ENCODE measurements at regions of chr7 and their contacts with region 1.

Region 1: DNA sequence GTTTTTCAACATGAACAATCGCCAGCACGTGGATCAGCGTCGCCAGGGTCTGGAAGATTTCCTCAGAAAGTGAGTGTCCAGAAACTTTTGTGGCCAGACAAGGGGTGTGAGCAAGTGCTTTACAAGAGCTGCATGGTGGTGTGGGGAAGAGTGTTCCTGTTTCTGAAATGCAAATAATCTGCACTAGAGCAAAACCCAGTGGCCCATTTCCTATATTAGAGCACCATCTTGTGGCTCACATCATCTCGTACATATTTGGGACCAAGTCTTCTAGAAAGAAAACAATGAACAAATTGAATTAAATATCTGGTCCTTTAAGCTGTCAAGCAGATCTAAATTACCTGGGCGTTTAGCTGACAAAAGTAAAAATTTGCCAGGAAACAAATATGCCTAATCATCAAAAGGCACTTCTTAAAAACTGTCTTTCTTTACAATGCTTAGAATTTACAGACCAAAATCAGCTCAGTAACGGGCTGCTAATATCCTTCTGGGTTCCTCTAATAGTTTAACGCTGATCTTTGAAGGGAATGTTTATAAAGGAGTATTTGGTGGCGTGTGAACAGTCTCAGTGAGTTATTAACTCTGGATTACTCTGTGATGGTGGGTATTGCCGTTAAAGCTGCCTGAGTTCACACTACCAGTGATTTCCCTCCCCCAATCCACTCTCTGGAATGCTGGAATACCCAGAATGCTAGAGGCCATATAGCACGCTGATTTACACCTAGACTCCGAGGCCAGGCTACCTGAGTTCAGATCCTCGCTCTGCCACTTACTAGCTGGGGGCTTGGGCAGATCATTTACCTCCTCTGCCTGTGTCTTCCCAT is 73.6 kb downstream of the SNX10 start:
- DNase-seq: peak; percentile 83
- ATAC-seq: peak; percentile 96
- H3K4me3 ChIP-seq: no peak overlapping the region
- H3K27ac ChIP-seq: peak overlapping the region; percentile 48; the same call in 1 of the 2 replicates
- H3K4me1 ChIP-seq: peaks cover 11% of the 10 kb centered on the region
- H3K27me3 ChIP-seq: no peaks in the 10 kb centered on the region
- CTCF ChIP-seq: peak; percentile 62 to 94 (median 64); a peak in 5 of 6 replicates
- EP300 ChIP-seq: no peak
- POLR2A ChIP-seq: no peak
- RAD21 ChIP-seq: peak; percentile 98

Region 2: DNA sequence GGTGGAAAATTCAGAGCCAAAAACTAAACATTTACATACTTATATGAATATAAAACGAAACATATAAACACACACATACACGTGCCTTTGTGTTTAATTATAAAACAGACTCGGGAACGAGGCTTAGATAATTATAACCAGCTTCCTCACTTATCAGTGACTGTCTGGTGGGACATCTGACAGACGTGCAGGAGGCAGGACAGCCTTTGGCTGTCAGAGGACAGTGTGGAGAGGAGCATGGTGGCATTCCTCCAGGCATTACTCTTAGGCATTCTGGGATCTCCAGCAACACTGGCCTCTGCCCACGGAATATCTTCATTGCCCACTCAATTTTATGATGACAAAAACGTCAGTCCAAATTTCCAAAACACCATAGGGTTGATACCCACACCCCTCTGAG is 475.5 kb before region 1 on chr7:
- CTCF ChIA-PET with region 1: interaction called, 138 read pairs
- POLR2A ChIA-PET with region 1: interaction called, 5 read pairs
- RAD21 ChIA-PET with region 1: interaction called, 68 read pairs
- SMC1A ChIA-PET with region 1: interaction called, 94 read pairs
- in situ Hi-C with region 1: loop called (anchors 5 kb)
- intact Hi-C with region 1: loop called (anchors 1 kb)
- DNase-seq: no peak
- ATAC-seq: no peak
- H3K4me3 ChIP-seq: no peak overlapping the region
- H3K27ac ChIP-seq: no peak overlapping the region
- H3K4me1 ChIP-seq: peaks cover 15% of the 10 kb centered on the region
- H3K27me3 ChIP-seq: no peaks in the 10 kb centered on the region; a peak in 1 of 4 replicates
- CTCF ChIP-seq: no peak
- EP300 ChIP-seq: no peak
- POLR2A ChIP-seq: no peak
- RAD21 ChIP-seq: no peak

Region 3: GRCh38 chr7:26151953-26152781 is 213.1 kb before region 1 on chr7 and contains the start of gene NFE2L3:
- CTCF ChIA-PET with region 1: interaction called, 16 read pairs
- POLR2A ChIA-PET with region 1: no interaction called
- RAD21 ChIA-PET with region 1: interaction called, 12 read pairs
- SMC1A ChIA-PET with region 1: interaction called, 9 read pairs
- in situ Hi-C with region 1: no loop called
- intact Hi-C with region 1: loop called (anchors 1 kb)
- DNase-seq: no peak
- ATAC-seq: peak; percentile 75
- H3K4me3 ChIP-seq: peak within 1 kb of the TSS; percentile 72
- H3K27ac ChIP-seq: peak within 1 kb of the TSS; percentile 88
- H3K4me1 ChIP-seq: peaks cover 23% of the 10 kb centered on the region
- H3K27me3 ChIP-seq: no peaks in the 10 kb centered on the region
- CTCF ChIP-seq: peak; percentile 6 to 17 (median 9); a peak in 1 of 6 replicates
- EP300 ChIP-seq: no peak
- POLR2A ChIP-seq: peak; percentile 82
- RAD21 ChIP-seq: no peak
- polyA plus RNA-seq, gene NFE2L3: 4.9 to 8.9 TPM

Region 4: DNA sequence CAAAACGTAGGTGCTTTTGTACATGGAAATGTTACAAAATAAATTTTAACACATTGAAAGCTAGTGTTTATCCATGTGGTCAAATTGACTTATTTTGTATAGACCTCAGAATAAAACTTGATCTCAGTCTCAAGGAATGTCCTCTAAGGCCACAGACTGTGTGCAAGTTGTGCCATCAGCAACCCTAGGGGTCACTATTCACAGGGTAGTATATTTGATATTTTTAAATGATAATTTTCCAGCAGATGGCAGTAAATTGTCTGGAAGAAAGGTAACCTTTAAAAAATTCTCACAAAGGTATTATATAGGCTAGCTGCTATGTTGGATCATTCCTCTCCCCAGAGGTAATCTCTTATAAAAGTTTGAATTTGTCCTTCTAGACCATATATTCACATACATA is 86.5 kb before region 1 on chr7:
- CTCF ChIA-PET with region 1: interaction called, 45 read pairs
- POLR2A ChIA-PET with region 1: no interaction called
- RAD21 ChIA-PET with region 1: interaction called, 9 read pairs
- SMC1A ChIA-PET with region 1: interaction called, 14 read pairs
- in situ Hi-C with region 1: no loop called
- intact Hi-C with region 1: loop called (anchors 1 kb)
- DNase-seq: no peak
- ATAC-seq: peak; percentile 84
- H3K4me3 ChIP-seq: no peak overlapping the region
- H3K27ac ChIP-seq: no peak overlapping the region
- H3K4me1 ChIP-seq: no peaks in the 10 kb centered on the region
- H3K27me3 ChIP-seq: no peaks in the 10 kb centered on the region
- CTCF ChIP-seq: peak; percentile 20 to 57 (median 42); a peak in 4 of 6 replicates
- EP300 ChIP-seq: no peak
- POLR2A ChIP-seq: no peak
- RAD21 ChIP-seq: peak; percentile 24; the same call in 1 of the 2 replicates

Region 5: GRCh38 chr7:26346611-26347203 is 18.6 kb before region 1 on chr7:
- CTCF ChIA-PET with region 1: interaction called, 25 read pairs
- POLR2A ChIA-PET with region 1: interaction called, 5 read pairs
- RAD21 ChIA-PET with region 1: interaction called, 41 read pairs
- SMC1A ChIA-PET with region 1: interaction called, 48 read pairs
- in situ Hi-C with region 1: no loop called
- intact Hi-C with region 1: no loop called
- DNase-seq: no peak
- ATAC-seq: peak; percentile 35
- H3K4me3 ChIP-seq: no peak overlapping the region
- H3K27ac ChIP-seq: no peak overlapping the region
- H3K4me1 ChIP-seq: peaks cover 14% of the 10 kb centered on the region
- H3K27me3 ChIP-seq: no peaks in the 10 kb centered on the region
- CTCF ChIP-seq: no peak
- EP300 ChIP-seq: no peak
- POLR2A ChIP-seq: no peak
- RAD21 ChIP-seq: no peak

Region 6: GRCh38 chr7:26417911-26418413 is 52.7 kb after region 1 on chr7:
- CTCF ChIA-PET with region 1: no interaction called
- POLR2A ChIA-PET with region 1: no interaction called
- RAD21 ChIA-PET with region 1: no interaction called
- SMC1A ChIA-PET with region 1: no interaction called
- in situ Hi-C with region 1: no loop called
- intact Hi-C with region 1: no loop called
- DNase-seq: no peak
- ATAC-seq: no peak
- H3K4me3 ChIP-seq: no peak overlapping the region
- H3K27ac ChIP-seq: no peak overlapping the region
- H3K4me1 ChIP-seq: no peaks in the 10 kb centered on the region
- H3K27me3 ChIP-seq: peaks cover 0 to 2% of the 10 kb centered on the region in 2 experiments; a peak in 2 of 4 replicates
- CTCF ChIP-seq: no peak
- EP300 ChIP-seq: no peak
- POLR2A ChIP-seq: no peak
- RAD21 ChIP-seq: no peak

Region 7: DNA sequence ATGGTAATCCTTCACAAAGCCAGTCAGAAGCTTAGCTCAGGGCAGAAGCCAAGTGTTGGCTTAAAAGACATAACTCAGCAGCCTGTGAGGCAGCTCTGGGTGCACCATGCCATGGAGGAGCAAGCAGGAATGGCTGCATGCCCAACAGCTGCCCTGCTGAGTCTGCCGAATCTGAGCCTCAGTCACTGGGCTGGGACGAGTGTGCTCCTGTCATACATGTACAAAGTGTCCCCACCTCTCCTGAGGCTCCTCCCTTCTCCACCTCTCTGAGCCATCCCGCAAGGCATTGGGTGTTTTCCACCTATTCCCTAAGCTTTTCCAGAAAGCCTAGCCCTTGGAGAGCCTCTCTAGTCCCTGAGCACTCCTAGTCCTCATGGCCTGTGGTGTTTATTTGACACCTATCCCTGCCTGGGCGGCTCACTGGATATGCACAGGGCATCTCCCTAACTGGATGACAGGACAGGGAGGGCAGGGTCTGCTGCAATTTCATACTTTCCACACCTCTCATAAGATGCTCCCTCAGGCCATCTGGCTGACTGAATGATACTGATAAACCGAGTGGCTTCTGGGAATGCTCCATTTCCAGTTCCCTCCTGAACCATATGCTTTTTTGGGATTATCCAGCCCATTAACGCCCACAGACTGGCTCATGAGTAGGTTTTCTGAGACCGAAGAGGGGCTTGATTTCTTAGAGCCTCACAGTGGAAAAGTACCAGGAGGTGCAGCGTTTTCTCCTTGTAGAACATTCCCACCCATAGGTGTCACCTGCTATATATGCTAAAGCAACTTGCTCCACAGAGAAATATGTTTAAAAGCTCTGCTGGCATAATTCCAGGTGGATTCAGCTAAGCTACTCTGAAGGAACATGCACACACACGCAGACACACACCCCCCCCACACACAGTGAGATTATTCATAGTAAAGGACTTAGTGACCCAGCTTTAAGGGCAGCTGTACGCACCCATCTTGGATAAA is 125.6 kb after region 1 on chr7:
- CTCF ChIA-PET with region 1: interaction called, 11 read pairs
- POLR2A ChIA-PET with region 1: no interaction called
- RAD21 ChIA-PET with region 1: interaction called, 5 read pairs
- SMC1A ChIA-PET with region 1: interaction called, 16 read pairs
- in situ Hi-C with region 1: no loop called
- intact Hi-C with region 1: no loop called
- DNase-seq: no peak
- ATAC-seq: no peak
- H3K4me3 ChIP-seq: no peak overlapping the region
- H3K27ac ChIP-seq: no peak overlapping the region
- H3K4me1 ChIP-seq: no peaks in the 10 kb centered on the region
- H3K27me3 ChIP-seq: no peaks in the 10 kb centered on the region; a peak in 3 of 4 replicates
- CTCF ChIP-seq: no peak
- EP300 ChIP-seq: no peak
- POLR2A ChIP-seq: no peak
- RAD21 ChIP-seq: no peak

Region 8: GRCh38 chr7:27160546-27161213 is 795.4 kb after region 1 on chr7:
- CTCF ChIA-PET with region 1: interaction called, 31 read pairs
- POLR2A ChIA-PET with region 1: no interaction called
- RAD21 ChIA-PET with region 1: interaction called, 13 read pairs
- SMC1A ChIA-PET with region 1: interaction called, 15 read pairs
- in situ Hi-C with region 1: loop called (anchors 5 kb)
- intact Hi-C with region 1: loop called (anchors 1 kb)
- DNase-seq: peak; percentile 23
- ATAC-seq: peak; percentile 89
- H3K4me3 ChIP-seq: peak overlapping the region; percentile 72
- H3K27ac ChIP-seq: no peak overlapping the region
- H3K4me1 ChIP-seq: no peaks in the 10 kb centered on the region
- H3K27me3 ChIP-seq: peaks cover 17 to 38% of the 10 kb centered on the region in 2 experiments
- CTCF ChIP-seq: peak; percentile 87 to 98 (median 93)
- EP300 ChIP-seq: no peak
- POLR2A ChIP-seq: no peak
- RAD21 ChIP-seq: peak; percentile 70